Gastrocnemius medialis (tissue), 4 donors: ENCODE measurements at regions of chr14 and their contacts with region 1.

Region 1: GRCh38 chr14:20697273-20698017 is 8.9 kb downstream of the ANG start:
- DNase-seq: peak; percentile 12 to 36
- ATAC-seq: peak; percentile 45 to 64
- H3K4me3 ChIP-seq: no peak overlapping the region
- H3K27ac ChIP-seq: no peak overlapping the region
- H3K4me1 ChIP-seq: no peaks in the 10 kb centered on the region
- H3K27me3 ChIP-seq: no peaks in the 10 kb centered on the region
- CTCF ChIP-seq: peak; percentile 48 to 68 (median 57)
- POLR2A ChIP-seq: no peak

Region 2: GRCh38 chr14:20855652-20856291 is 158.3 kb after region 1 on chr14:
- in situ Hi-C with region 1: loop called in 2 of 4 experiments (anchors 5 to 10 kb)
- intact Hi-C with region 1: loop called (anchors 1 kb)
- DNase-seq: peak in 1 of 2 donors; percentile 36
- ATAC-seq: peak; percentile 80 to 88
- H3K4me3 ChIP-seq: no peak overlapping the region
- H3K27ac ChIP-seq: no peak overlapping the region
- H3K4me1 ChIP-seq: peaks cover 0 to 4% of the 10 kb centered on the region in 2 donors
- H3K27me3 ChIP-seq: no peaks in the 10 kb centered on the region
- CTCF ChIP-seq: peak; percentile 28 to 67 (median 55)
- POLR2A ChIP-seq: no peak

Region 3: DNA sequence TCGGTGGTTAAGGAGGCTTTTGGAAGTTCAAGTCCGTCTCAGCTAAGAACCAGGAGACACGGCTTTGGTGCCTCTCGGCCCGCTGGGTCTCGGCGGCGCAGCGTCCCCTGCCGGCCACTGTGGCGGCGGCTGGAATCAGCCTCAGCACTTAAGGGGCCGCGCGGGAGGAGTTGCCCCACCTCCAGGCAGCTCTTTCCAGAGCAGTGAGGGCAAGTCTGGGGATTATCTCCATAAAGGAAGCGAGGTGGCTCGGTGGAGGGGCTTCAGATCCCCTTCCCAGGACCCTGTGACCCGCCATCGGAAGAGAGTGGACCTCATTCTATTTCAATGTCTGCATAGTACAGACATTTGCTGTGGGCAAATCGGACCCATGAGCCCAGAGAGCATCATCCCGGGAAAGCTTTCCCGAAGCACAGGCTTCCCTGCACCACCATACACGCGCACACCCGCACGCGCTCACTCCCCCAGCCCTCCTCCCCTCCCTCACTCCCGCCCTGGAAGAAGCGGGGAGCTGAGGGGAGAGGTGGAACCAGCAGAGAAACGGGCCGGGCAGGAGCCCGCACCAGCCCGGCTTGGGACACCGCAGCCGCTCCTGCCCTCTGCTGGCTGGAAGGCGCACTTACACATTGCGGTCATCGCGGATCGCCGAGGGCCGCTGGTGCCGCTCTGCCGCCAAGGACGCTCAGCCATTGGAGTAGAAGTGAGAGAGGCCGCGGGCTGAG is 273.7 kb after region 1 on chr14:
- in situ Hi-C with region 1: loop called in 1 of 4 experiments (anchors 10 kb)
- intact Hi-C with region 1: loop called (anchors 5 kb)
- DNase-seq: peak; percentile 62 to 74
- ATAC-seq: peak; percentile 92 to 93
- H3K4me3 ChIP-seq: peak overlapping the region; percentile 68 to 80 (median 71)
- H3K27ac ChIP-seq: peak overlapping the region; percentile 40 to 67 (median 59)
- H3K4me1 ChIP-seq: peaks cover 5 to 7% of the 10 kb centered on the region in 2 donors
- H3K27me3 ChIP-seq: no peaks in the 10 kb centered on the region
- CTCF ChIP-seq: peak; percentile 77 to 88 (median 84)
- POLR2A ChIP-seq: no peak